Calu3 (cell line): ENCODE measurements at regions of chr2 and their contacts with region 1.

Region 1: DNA sequence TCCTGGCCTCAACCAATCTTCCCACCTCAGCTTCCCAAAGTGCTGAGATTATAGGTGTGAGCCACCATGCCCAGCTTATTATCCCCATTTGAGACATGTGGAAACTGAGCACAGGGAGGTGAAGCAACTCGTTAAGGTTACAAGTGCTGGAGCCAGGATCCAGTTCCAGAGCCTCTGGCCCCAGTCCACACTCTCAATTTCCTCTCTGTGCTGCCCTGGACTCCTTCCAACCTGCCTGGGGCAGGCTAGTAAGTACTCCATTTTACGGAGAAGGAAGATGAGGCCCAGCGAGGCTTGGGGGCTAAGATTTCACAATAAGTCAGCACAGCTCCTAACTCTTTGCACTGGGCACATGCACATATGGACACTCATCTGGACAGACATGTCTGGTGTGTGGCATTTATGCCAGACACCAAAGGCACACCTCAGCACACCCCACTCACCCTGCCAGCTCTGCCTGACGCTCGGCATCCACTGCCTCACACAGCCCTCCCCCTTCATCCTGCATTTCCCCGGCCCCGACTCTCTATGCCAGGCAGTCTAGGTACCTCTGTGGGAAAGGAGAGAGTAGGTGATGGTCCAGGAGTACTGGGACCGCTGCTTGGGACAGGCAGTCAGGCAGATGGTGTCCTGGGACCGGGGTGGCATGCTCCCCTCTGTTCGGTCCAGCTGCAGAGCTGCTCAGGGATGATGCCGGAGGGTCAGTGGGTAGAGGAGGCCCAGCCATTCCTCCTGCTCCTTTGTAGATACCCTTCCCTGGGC is 20.5 kb downstream of the CFAP65 start:
- DNase-seq: no peak
- H3K4me3 Mint-ChIP-seq: no peak overlapping the region
- H3K27ac Mint-ChIP-seq: no peak overlapping the region
- H3K4me1 Mint-ChIP-seq: no peaks in the 10 kb centered on the region
- H3K27me3 Mint-ChIP-seq: peaks cover 29% of the 10 kb centered on the region
- CTCF ChIP-seq: no peak

Region 2: GRCh38 chr2:219057709-219058540 is 37.1 kb after region 1 on chr2:
- CTCF ChIA-PET with region 1: interaction called, 13 read pairs
- intact Hi-C with region 1: no loop called
- DNase-seq: peak; percentile 93
- H3K4me3 Mint-ChIP-seq: peak overlapping the region; percentile 76
- H3K27ac Mint-ChIP-seq: no peak overlapping the region
- H3K4me1 Mint-ChIP-seq: peaks cover 36% of the 10 kb centered on the region
- H3K27me3 Mint-ChIP-seq: peaks cover 22% of the 10 kb centered on the region
- CTCF ChIP-seq: peak; percentile 91

Region 3: DNA sequence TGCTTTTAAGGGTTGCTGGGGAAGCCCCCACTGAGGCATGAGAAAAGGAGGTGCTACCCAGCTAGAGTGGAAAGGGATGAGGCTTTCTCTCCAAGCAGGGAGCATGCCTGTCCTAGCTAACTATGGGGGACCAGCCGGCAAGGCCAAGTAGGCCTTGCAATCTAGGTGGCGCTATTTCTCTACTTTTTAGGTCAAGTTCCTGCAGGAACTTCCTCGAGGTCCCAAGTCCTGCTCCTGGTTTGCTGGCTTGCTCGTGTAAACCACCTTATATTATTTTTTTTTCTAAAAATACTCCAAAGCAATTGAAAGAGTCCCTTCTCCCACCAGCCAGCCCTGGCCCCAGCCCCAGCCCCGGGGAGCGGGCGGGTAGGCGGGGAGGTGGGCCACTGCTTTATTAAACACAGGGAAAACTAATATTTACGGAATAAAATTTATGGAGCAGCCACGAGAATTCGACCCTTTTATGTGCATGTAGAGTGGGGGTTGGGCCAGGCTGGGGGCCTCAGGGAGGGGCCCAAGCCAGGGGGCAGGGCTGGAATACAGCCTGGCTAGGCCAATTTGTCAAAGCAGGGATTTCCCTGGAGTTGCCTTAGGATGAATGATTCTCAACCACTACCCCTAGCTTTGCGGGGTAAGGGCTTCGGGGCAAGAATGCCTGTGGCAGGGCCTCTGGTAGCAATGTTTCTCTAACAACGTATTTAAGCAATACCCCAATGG is 52.8 kb after region 1 on chr2:
- CTCF ChIA-PET with region 1: no interaction called
- intact Hi-C with region 1: no loop called
- DNase-seq: peak; percentile 58
- H3K4me3 Mint-ChIP-seq: no peak overlapping the region
- H3K27ac Mint-ChIP-seq: no peak overlapping the region
- H3K4me1 Mint-ChIP-seq: peaks cover 24% of the 10 kb centered on the region
- H3K27me3 Mint-ChIP-seq: no peaks in the 10 kb centered on the region
- CTCF ChIP-seq: peak; percentile 77